CD4-positive, alpha-beta memory T cell (primary cell): ENCODE measurements at regions of chr17 and their contacts with region 1.

Region 1: DNA sequence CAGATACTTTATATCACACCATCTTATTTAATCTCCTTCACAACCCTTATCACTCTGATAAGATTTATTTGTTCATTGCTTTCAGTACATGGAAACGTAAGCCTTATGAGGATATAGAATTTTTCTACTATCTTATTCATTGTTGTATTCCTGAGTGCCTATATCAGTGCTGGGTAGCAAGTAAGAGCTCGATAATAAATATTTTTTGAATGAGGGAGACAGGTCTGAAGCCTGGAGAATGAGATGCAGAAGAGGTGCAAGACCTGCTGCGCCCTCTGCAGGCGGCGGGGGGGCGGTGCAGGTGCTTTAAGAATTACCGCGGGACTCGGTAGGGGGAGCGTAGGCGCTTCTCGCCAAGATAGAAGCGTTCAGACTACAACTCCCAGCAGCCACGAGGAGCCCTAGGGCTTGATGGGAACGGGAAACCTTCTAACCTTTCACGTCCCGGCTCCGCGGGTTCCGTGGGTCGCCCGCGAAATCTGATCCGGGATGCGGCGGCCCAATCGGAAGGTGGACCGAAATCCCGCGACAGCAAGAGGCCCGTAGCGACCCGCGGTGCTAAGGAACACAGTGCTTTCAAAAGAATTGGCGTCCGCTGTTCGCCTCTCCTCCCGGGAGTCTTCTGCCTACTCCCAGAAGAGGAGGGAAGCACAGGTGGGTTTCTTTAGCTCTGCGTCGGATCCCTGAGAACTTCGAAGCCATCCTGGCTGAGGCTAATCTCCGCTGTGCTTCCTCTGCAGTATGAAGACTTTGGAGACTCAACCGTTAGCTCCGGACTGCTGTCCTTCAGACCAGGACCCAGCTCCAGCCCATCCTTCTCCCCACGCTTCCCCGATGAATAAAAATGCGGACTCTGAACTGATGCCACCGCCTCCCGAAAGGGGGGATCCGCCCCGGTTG is at the start of gene WRAP53:
- DNase-seq: peak; percentile 95 to 97 (median 96)
- H3K4me3 ChIP-seq: peak within 1 kb of the TSS; percentile 100
- H3K4me3 Mint-ChIP-seq: peak within 1 kb of the TSS; percentile 93 to 98 (median 96)
- H3K27ac ChIP-seq: peak within 1 kb of the TSS; percentile 99
- H3K27ac Mint-ChIP-seq: peak within 1 kb of the TSS; percentile 98 to 100 (median 99)
- H3K4me1 ChIP-seq: peaks cover 40% of the 10 kb centered on the region
- H3K4me1 Mint-ChIP-seq: peaks cover 18 to 53% (median 40%) of the 10 kb centered on the region in 4 donors
- H3K27me3 ChIP-seq: no peaks in the 10 kb centered on the region
- H3K27me3 Mint-ChIP-seq: no peaks in the 10 kb centered on the region
- total RNA-seq, gene WRAP53: 11.9 to 12.5 TPM

Region 2: GRCh38 chr17:7035591-7036368 is 652.4 kb before region 1 on chr17 and contains the start of gene SLC16A13:
- CTCF ChIA-PET with region 1: no interaction called
- POLR2A ChIA-PET with region 1: interaction called, 16 read pairs
- intact Hi-C with region 1: no loop called
- DNase-seq: peak; percentile 97 to 100 (median 98)
- H3K4me3 ChIP-seq: peak within 1 kb of the TSS; percentile 32 to 81
- H3K4me3 Mint-ChIP-seq: peak within 1 kb of the TSS; percentile 90 to 96 (median 94)
- H3K27ac ChIP-seq: peak within 1 kb of the TSS; percentile 87
- H3K27ac Mint-ChIP-seq: peak within 1 kb of the TSS; percentile 97 to 99 (median 98)
- H3K4me1 ChIP-seq: peaks cover 65% of the 10 kb centered on the region
- H3K4me1 Mint-ChIP-seq: peaks cover 25 to 81% (median 49%) of the 10 kb centered on the region in 4 donors
- H3K27me3 ChIP-seq: no peaks in the 10 kb centered on the region
- H3K27me3 Mint-ChIP-seq: no peaks in the 10 kb centered on the region
- total RNA-seq, gene SLC16A13: 13.1 to 13.7 TPM

Region 3: DNA sequence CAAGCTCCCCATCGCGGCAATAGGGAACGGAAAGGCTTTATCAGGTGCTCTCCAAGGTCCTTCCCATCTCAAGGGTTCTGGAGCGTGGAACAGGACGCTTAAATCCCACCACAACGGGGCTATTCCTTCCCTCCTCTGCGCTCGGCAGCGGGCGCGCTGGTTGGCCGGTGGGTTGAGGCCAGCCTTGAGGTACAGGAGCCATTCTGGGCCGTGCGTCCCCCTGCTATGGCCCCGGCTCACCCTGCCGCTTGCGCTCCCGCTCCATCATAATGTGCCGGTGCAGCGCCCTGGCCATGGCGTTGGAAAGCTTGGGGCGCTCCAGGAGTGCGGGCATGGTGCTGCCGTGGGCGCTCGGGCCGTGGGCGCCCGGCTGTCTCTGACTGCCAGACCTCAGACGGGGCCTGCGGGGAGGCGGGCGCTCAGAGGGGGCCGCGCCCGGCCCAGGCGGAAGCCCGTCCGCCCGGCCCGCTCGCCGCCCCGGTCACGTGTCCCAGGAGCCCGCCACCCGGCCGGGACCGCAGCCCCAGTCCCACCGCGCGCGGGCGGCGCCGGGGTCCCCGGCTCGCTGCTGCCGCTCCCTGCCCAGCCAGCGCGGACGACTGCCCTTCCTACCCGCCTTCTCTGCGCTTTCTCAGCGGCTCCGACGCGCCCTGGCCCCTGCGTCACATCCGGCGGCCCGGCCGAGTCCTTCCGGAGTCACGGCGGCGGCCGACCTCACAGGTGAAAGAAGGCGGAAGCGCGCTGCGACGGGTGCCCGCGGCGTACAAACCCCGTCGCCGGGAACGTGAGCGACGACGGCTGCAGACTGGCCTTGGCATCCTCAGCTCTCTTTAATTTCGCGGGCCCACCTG is 373.2 kb before region 1 on chr17 and contains the start of gene GPS2:
- CTCF ChIA-PET with region 1: no interaction called
- POLR2A ChIA-PET with region 1: interaction called, 11 read pairs
- intact Hi-C with region 1: no loop called
- DNase-seq: peak; percentile 92 to 94 (median 93)
- H3K4me3 ChIP-seq: peak within 1 kb of the TSS; percentile 68 to 76
- H3K4me3 Mint-ChIP-seq: peak within 1 kb of the TSS; percentile 83 to 97 (median 92)
- H3K27ac ChIP-seq: peak within 1 kb of the TSS; percentile 83
- H3K27ac Mint-ChIP-seq: peak within 1 kb of the TSS; percentile 92 to 98 (median 96)
- H3K4me1 ChIP-seq: peaks cover 50% of the 10 kb centered on the region
- H3K4me1 Mint-ChIP-seq: peaks cover 29 to 64% (median 44%) of the 10 kb centered on the region in 4 donors
- H3K27me3 ChIP-seq: no peaks in the 10 kb centered on the region
- H3K27me3 Mint-ChIP-seq: no peaks in the 10 kb centered on the region
- total RNA-seq, gene GPS2: 127 to 132 TPM

Region 4: DNA sequence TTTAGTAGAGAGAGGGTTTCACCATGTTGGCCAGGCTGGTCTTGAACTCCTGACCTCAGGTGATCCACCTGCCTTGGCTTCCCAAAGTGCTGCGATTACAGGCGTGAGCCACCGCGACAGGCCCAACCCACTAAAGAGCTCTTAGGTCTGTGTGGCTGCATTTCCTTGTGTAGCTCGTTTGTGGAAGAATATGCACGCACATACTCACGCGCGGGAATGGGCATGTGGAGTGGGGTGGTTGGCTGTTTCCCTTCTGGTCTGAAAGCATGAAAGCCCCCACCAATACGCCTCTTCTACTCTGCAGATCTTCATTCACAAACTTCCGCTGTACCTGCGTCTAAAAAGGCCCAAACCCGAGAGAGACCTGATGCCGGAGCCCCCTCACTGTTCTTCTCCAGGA is 233.2 kb before region 1 on chr17:
- CTCF ChIA-PET with region 1: interaction called, 3 read pairs
- POLR2A ChIA-PET with region 1: interaction called, 11 read pairs
- intact Hi-C with region 1: loop called (anchors 5 kb)
- DNase-seq: no peak
- H3K4me3 ChIP-seq: peak overlapping the region; percentile 86 to 93
- H3K4me3 Mint-ChIP-seq: peak overlapping the region; percentile 92 to 100 (median 94)
- H3K27ac ChIP-seq: peak overlapping the region; percentile 73
- H3K27ac Mint-ChIP-seq: peak overlapping the region; percentile 88 to 98 (median 94)
- H3K4me1 ChIP-seq: peaks cover 23% of the 10 kb centered on the region
- H3K4me1 Mint-ChIP-seq: peaks cover 18 to 36% (median 22%) of the 10 kb centered on the region in 4 donors
- H3K27me3 ChIP-seq: no peaks in the 10 kb centered on the region
- H3K27me3 Mint-ChIP-seq: peaks cover 0 to 2% of the 10 kb centered on the region in 2 donors

Region 5: GRCh38 chr17:7583253-7584109 is 104.7 kb before region 1 on chr17 and contains the start of gene MPDU1:
- CTCF ChIA-PET with region 1: interaction called, 22 read pairs
- POLR2A ChIA-PET with region 1: interaction called, 116 read pairs
- intact Hi-C with region 1: loop called (anchors 1 kb)
- DNase-seq: peak; percentile 95 to 97 (median 97)
- H3K4me3 ChIP-seq: peak within 1 kb of the TSS; percentile 91 to 92
- H3K4me3 Mint-ChIP-seq: peak within 1 kb of the TSS; percentile 99 to 100 (median 100)
- H3K27ac ChIP-seq: peak within 1 kb of the TSS; percentile 97
- H3K27ac Mint-ChIP-seq: peak within 1 kb of the TSS; percentile 99 to 100 (median 100)
- H3K4me1 ChIP-seq: peaks cover 50% of the 10 kb centered on the region
- H3K4me1 Mint-ChIP-seq: peaks cover 20 to 65% (median 43%) of the 10 kb centered on the region in 4 donors
- H3K27me3 ChIP-seq: no peaks in the 10 kb centered on the region
- H3K27me3 Mint-ChIP-seq: no peaks in the 10 kb centered on the region
- total RNA-seq, gene MPDU1: 23.8 to 25.0 TPM

Region 6: DNA sequence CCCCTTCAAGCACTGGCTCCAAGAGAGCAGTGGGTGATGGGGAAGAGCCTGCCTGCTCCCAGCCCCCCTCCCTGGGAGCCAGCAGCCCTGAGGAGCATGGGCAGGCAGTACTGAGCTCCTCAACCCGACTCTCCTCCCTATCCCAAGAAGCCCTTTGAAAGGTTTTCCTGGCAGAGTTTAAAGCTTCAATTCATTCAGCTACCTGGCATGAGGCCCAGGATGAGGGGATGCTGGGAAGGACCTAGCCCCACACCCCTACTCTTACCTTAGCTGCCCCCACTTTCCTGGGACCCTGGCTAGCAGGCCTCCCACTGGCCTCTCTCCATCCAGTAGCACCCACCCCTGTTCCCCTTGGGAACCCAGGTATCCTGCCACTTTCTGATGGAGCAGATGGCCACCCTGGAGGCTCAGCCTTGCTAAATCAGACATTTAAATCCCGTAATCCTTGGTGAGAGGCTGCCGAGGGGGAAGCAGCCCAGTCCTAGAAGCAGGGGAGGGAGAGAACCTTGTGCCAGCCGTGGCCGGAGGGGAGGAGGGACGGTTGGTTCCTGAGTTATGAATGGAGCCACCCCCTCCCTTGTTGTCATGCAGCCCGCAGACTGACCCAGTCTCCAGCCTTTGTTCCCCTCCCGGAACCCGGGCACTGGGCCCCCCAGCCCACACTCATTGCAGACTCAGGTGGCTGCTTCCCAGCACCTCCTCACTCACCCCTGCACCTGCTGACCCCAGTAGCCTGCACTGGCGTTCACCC is 20.3 kb before region 1 on chr17:
- CTCF ChIA-PET with region 1: interaction called, 13 read pairs
- POLR2A ChIA-PET with region 1: interaction called, 47 read pairs
- intact Hi-C with region 1: no loop called
- DNase-seq: no peak
- H3K4me3 ChIP-seq: no peak overlapping the region
- H3K4me3 Mint-ChIP-seq: no peak overlapping the region
- H3K27ac ChIP-seq: no peak overlapping the region
- H3K27ac Mint-ChIP-seq: no peak overlapping the region
- H3K4me1 ChIP-seq: no peaks in the 10 kb centered on the region
- H3K4me1 Mint-ChIP-seq: no peaks in the 10 kb centered on the region
- H3K27me3 ChIP-seq: no peaks in the 10 kb centered on the region
- H3K27me3 Mint-ChIP-seq: no peaks in the 10 kb centered on the region

Region 7: DNA sequence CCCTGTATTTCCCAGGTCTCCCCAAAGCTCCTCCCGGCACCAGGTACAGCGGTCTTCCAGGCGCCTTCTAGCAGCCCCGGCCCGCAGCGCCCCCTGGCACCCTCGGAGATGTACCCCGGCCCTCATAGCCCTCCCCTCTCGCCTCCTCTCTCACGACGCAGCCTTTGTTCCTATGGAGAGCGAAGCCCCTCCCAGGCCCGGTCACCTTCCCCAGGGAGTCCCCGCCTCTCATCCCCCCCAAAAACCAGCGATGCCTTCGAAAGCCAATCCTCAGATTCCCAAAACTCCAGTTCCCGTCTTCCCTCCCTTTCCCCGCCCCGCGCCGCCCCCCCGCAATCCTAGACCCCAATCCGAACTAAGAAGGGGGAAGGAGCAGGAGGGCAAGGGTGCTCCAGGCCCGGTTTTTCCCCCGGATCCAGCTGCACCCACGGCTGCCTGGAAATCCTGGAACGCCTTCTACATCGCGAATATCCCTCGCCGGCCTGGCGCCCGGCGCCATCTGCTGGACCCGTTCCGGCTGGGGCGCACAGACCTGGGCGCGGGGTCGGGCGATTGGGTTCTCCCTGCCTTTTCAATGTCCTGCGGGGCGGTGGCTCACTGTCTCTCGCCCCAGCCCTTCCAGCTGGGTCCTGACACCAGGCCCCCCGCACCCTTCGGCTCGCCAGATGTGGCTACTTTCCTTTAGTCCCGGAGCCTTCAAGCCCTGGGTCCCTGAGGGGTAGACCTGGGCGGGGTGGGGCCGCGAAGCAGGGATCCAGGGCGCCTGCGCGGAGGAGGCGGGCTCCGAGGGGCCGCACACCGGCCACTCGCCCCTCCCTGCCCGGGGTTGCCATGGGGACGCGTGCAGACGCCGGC is 29.0 kb after region 1 on chr17 and contains the start of gene DNAH2:
- CTCF ChIA-PET with region 1: no interaction called
- POLR2A ChIA-PET with region 1: no interaction called
- intact Hi-C with region 1: no loop called
- DNase-seq: no peak
- H3K4me3 ChIP-seq: peak within 1 kb of the TSS in 1 of 2 donors; percentile 41
- H3K4me3 Mint-ChIP-seq: peak within 1 kb of the TSS; percentile 55 to 86 (median 68)
- H3K27ac ChIP-seq: no peak within 1 kb of the TSS
- H3K27ac Mint-ChIP-seq: no peak within 1 kb of the TSS
- H3K4me1 ChIP-seq: peaks cover 21% of the 10 kb centered on the region
- H3K4me1 Mint-ChIP-seq: peaks cover 5 to 26% (median 20%) of the 10 kb centered on the region in 4 donors
- H3K27me3 ChIP-seq: peaks cover 28% of the 10 kb centered on the region
- H3K27me3 Mint-ChIP-seq: peaks cover 56 to 73% of the 10 kb centered on the region in 2 donors
- total RNA-seq, gene DNAH2: not detected

Region 8: GRCh38 chr17:8222630-8223356 is 534.6 kb after region 1 on chr17:
- CTCF ChIA-PET with region 1: no interaction called
- POLR2A ChIA-PET with region 1: interaction called, 19 read pairs
- intact Hi-C with region 1: no loop called
- DNase-seq: peak; percentile 88 to 91 (median 90)
- H3K4me3 ChIP-seq: peak overlapping the region; percentile 63 to 99
- H3K4me3 Mint-ChIP-seq: peak overlapping the region; percentile 93 to 98 (median 94)
- H3K27ac ChIP-seq: peak overlapping the region; percentile 89
- H3K27ac Mint-ChIP-seq: peak overlapping the region; percentile 97 to 100 (median 98)
- H3K4me1 ChIP-seq: peaks cover 51% of the 10 kb centered on the region
- H3K4me1 Mint-ChIP-seq: peaks cover 36 to 85% (median 69%) of the 10 kb centered on the region in 4 donors
- H3K27me3 ChIP-seq: no peaks in the 10 kb centered on the region
- H3K27me3 Mint-ChIP-seq: peaks cover 4 to 21% of the 10 kb centered on the region in 2 donors